ENCODE measurements at regions of chr3 and their contacts with region 1.

Region 1: DNA sequence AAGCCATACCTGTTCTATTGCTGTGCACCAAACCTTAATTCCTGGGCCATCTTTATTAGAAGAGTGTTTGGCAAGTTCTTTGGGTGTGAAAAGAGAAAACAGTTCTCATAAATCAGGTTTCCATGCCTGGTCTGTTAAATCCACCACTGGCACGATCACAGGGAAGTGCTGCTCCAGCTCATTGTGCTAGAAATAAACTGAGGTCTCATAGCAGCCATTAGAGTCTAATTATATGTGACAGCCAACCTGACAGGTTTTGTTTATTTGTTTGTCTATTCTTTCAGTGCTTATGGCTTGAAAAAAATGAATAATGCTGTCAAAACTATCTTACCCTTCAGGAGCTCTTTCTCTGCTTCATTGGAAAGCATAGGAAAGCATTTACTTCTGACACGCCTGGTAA is 147.1 kb upstream of the CNTN6 start:
- DNase-seq: no peak
- H3K4me3 ChIP-seq: no peak overlapping the region
- H3K27ac ChIP-seq: no peak overlapping the region
- H3K4me1 ChIP-seq: no peaks in the 10 kb centered on the region
- H3K27me3 ChIP-seq: no peaks in the 10 kb centered on the region
- CTCF ChIP-seq: no peak
- POLR2A ChIP-seq: no peak

Region 2: GRCh38 chr3:1515882-1516281 is 570.1 kb after region 1 on chr3:
- intact Hi-C with region 1: loop called (anchors 5 kb)
- DNase-seq: no peak
- H3K4me3 ChIP-seq: no peak overlapping the region
- H3K27ac ChIP-seq: no peak overlapping the region
- H3K4me1 ChIP-seq: no peaks in the 10 kb centered on the region
- H3K27me3 ChIP-seq: no peaks in the 10 kb centered on the region
- CTCF ChIP-seq: no peak
- POLR2A ChIP-seq: no peak

Region 3: GRCh38 chr3:2543247-2543646 is 1597.5 kb after region 1 on chr3:
- intact Hi-C with region 1: no loop called
- DNase-seq: no peak
- H3K4me3 ChIP-seq: no peak overlapping the region
- H3K27ac ChIP-seq: no peak overlapping the region
- H3K4me1 ChIP-seq: no peaks in the 10 kb centered on the region
- H3K27me3 ChIP-seq: no peaks in the 10 kb centered on the region
- CTCF ChIP-seq: no peak
- POLR2A ChIP-seq: no peak